ENCODE measurements at regions of chr11 and their contacts with region 1.

Region 1: DNA sequence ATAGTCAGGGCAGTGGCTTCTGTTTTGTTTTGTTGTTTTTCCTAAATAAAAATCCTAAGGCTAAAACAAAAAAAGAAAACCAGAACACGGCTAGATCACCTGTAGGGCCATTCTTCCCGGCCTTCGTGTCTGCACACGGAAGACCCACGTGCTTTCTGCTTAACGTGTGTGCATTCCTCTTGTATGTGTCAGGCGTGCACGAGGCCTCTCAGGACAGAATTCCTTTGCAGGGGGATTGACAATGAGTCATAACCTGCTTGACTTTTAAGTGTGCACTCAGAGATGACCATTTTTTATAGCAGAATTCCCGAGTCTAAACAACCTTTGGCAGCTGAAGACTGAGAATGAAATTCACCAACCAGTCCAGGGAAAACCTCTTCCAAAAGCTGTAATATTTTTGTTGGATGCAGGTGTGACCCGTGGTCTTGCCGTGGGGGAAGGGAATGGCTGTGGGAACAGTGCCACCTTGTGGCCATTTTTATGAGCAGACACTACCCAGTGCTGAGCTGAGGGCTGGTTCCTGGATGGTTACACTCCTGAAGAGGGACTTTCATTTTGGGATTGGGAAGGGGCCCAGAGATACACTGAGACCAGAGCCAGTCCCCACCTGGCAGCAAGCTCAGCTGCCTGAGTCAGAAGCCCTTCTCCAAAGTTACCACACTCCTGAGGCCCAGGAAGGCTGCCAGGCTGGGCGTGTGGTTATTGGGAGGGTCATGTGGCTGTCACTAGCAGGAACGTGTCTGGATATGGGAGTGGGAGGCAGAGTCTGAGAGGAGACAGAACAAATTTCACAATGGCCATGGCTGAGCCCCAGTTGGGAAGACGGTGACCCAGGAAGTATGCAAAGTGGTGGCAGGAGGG is 35.8 kb upstream of the DKK3 start:
- DNase-seq: peak; percentile 94
- H3K4me3 ChIP-seq: peak overlapping the region; percentile 34
- CTCF ChIP-seq: peak; percentile 82

Region 2: GRCh38 chr11:11793073-11793472 is 251.1 kb before region 1 on chr11:
- CTCF ChIA-PET with region 1: interaction called, 66 read pairs
- POLR2A ChIA-PET with region 1: no interaction called
- DNase-seq: no peak
- H3K4me3 ChIP-seq: no peak overlapping the region
- CTCF ChIP-seq: no peak

Region 3: DNA sequence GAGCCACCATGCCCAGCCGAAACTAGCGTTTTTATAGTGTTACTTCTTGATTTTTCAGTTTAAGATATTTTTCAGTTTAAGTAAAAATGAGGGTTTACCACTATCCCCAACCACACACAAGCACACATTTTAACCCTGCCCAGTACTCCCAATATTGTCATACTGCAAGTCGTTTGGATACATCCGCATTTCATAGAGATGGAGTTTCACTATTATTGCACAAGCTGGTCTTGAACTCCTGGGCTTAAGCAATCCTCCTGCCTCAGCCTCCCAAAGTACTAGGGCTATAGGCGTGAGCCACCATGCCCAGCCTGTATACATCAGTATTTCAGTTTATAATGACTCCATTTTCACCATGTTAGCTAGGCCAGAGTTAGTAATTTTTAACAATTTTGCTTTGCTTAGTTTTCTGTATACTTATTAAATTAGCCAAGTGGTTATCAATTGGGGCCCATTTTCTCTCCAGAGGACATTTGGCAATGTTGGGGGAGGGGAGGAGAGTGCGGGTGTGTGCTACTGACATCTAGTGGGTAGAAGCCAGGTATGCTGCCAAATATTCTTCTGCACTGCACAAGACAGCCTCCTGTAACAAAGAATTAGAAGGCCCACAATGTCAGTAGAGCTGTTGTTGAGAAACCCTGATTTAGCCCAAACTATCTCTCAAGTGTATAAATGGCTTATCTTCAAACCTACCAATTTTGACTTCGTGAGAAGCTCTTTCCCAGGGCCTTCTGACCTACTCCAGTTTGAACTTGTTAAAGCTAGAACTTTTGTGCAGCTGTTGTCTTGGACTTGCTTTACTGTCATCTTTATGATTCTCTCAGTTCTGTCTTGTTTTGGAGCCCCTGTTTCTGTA is 195.1 kb before region 1 on chr11:
- CTCF ChIA-PET with region 1: no interaction called
- POLR2A ChIA-PET with region 1: no interaction called
- DNase-seq: no peak
- H3K4me3 ChIP-seq: no peak overlapping the region
- CTCF ChIP-seq: peak; percentile 65

Region 4: GRCh38 chr11:11931461-11932055 is 112.6 kb before region 1 on chr11:
- CTCF ChIA-PET with region 1: interaction called, 101 read pairs
- POLR2A ChIA-PET with region 1: no interaction called
- DNase-seq: no peak
- H3K4me3 ChIP-seq: no peak overlapping the region
- CTCF ChIP-seq: peak; percentile 40

Region 5: DNA sequence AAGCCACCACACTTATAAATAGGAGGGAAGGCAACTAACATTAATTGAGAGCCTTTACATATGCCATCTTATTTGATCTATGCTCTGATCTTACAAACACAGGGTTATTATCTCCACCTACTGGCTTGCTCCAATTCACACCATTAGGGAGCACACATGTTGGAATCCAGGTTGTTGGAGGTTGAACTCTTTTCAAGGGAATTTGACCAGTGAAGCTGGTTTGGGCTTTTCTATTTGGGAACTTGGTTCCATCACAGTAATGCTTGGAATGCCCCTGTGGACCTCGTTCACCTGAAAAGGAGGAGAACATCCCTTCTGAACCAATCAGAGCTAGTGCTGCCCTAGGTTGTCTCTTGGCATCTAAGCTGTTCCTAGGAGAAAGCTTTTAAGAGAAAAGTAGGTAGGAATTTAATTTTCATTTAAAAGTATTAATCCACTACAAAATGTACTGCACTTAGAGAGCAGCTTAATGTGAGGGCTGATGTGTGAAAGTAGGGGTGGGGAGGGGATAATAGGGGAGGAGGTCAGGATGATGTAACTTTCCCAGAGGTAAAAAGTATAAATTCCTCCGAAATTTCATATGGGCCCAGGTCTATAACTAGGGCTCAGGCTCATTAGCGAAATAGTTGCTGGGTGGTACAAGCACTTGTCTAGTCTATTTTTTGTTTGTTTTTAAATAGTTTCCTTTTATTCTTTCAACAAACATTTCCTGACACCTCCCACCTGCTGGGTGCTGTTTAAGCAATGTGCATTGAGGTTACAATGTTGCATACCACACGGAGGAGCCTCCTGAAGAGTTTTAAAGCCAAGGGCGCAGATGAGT is 58.6 kb after region 1 on chr11:
- CTCF ChIA-PET with region 1: interaction called, 10 read pairs
- POLR2A ChIA-PET with region 1: no interaction called
- DNase-seq: no peak
- H3K4me3 ChIP-seq: no peak overlapping the region
- CTCF ChIP-seq: no peak

Region 6: GRCh38 chr11:12224537-12224893 is 180.3 kb after region 1 on chr11:
- CTCF ChIA-PET with region 1: interaction called, 10 read pairs
- POLR2A ChIA-PET with region 1: no interaction called
- DNase-seq: no peak
- H3K4me3 ChIP-seq: no peak overlapping the region
- CTCF ChIP-seq: no peak